ENCODE measurements at regions of chr6 and their contacts with region 1.

Region 1: GRCh38 chr6:139291813-139292619 is at the start of gene TXLNB:
- DNase-seq: peak; percentile 81 to 95 (median 89)
- H3K4me3 ChIP-seq: peak within 1 kb of the TSS; percentile 26 to 42
- H3K4me3 Mint-ChIP-seq: peak within 1 kb of the TSS; percentile 79 to 91 (median 85)
- H3K27ac ChIP-seq: peak within 1 kb of the TSS; percentile 59
- H3K27ac Mint-ChIP-seq: peak within 1 kb of the TSS; percentile 94 to 99 (median 97)
- H3K4me1 ChIP-seq: peaks cover 59% of the 10 kb centered on the region
- H3K4me1 Mint-ChIP-seq: peaks cover 44 to 76% (median 58%) of the 10 kb centered on the region in 4 donors
- H3K27me3 ChIP-seq: no peaks in the 10 kb centered on the region
- H3K27me3 Mint-ChIP-seq: no peaks in the 10 kb centered on the region
- total RNA-seq, gene TXLNB: 1.4 to 1.6 TPM

Region 2: GRCh38 chr6:139109558-139109957 is 182.5 kb before region 1 on chr6:
- CTCF ChIA-PET with region 1: interaction called, 7 read pairs
- POLR2A ChIA-PET with region 1: interaction called, 11 read pairs
- intact Hi-C with region 1: no loop called
- DNase-seq: peak in 4 of 5 donors; percentile 11 to 30 (median 21)
- H3K4me3 ChIP-seq: no peak overlapping the region
- H3K4me3 Mint-ChIP-seq: peak overlapping the region in 2 of 8 donors; percentile 13 to 39
- H3K27ac ChIP-seq: no peak overlapping the region
- H3K27ac Mint-ChIP-seq: peak overlapping the region; percentile 3 to 87 (median 44)
- H3K4me1 ChIP-seq: peaks cover 50% of the 10 kb centered on the region
- H3K4me1 Mint-ChIP-seq: peaks cover 38 to 59% (median 51%) of the 10 kb centered on the region in 4 donors
- H3K27me3 ChIP-seq: no peaks in the 10 kb centered on the region
- H3K27me3 Mint-ChIP-seq: no peaks in the 10 kb centered on the region

Region 3: GRCh38 chr6:139161817-139162284 is 130.2 kb before region 1 on chr6:
- CTCF ChIA-PET with region 1: interaction called, 5 read pairs
- POLR2A ChIA-PET with region 1: interaction called, 27 read pairs
- intact Hi-C with region 1: no loop called
- DNase-seq: peak; percentile 62 to 87 (median 69)
- H3K4me3 ChIP-seq: peak overlapping the region in 1 of 2 donors; percentile 12
- H3K4me3 Mint-ChIP-seq: peak overlapping the region; percentile 76 to 91 (median 83)
- H3K27ac ChIP-seq: peak overlapping the region; percentile 56
- H3K27ac Mint-ChIP-seq: peak overlapping the region; percentile 86 to 98 (median 95)
- H3K4me1 ChIP-seq: peaks cover 100% of the 10 kb centered on the region
- H3K4me1 Mint-ChIP-seq: peaks cover 73 to 97% (median 85%) of the 10 kb centered on the region in 4 donors
- H3K27me3 ChIP-seq: no peaks in the 10 kb centered on the region
- H3K27me3 Mint-ChIP-seq: no peaks in the 10 kb centered on the region

Region 4: DNA sequence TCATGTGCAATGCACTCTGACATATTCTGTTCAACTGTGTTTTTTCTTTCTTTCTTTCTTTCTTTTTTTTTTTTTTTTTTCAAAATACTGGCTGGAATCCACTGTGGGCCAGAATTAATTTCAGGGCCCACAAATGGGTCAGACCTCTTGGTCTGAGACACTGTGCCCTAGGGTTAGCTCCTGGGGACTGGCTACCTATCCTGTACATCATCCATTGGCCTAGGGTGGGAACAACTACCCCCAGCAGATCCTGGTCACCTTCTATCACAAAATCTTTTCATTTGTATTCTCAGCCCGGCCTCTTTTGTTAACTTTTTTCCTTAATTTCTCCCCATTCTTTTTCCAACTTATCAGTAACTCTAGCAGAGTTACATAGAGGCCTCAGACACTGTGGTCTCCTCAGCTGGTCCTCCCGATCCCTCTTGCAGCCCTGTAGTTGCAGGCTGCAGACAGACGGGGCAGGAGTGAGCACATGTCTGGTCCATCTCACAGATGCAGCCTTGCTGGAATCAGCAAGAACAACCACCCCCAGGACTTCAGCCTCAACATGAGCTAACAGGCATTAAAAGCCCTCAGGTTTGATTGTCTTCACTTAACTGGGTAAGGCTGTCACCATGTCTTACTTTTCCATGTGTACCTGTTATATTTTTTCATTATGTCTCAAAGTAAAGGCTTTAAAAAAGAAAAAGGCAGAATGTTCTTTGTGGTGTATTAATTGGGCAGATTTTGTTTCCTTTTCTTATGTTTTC is 41.5 kb before region 1 on chr6:
- CTCF ChIA-PET with region 1: interaction called, 27 read pairs
- POLR2A ChIA-PET with region 1: interaction called, 54 read pairs
- intact Hi-C with region 1: loop called (anchors 2 kb)
- DNase-seq: peak; percentile 55 to 62 (median 60)
- H3K4me3 ChIP-seq: peak overlapping the region in 1 of 2 donors; percentile 1
- H3K4me3 Mint-ChIP-seq: peak overlapping the region; percentile 16 to 90 (median 69)
- H3K27ac ChIP-seq: peak overlapping the region; percentile 40
- H3K27ac Mint-ChIP-seq: peak overlapping the region; percentile 80 to 99 (median 92)
- H3K4me1 ChIP-seq: peaks cover 45% of the 10 kb centered on the region
- H3K4me1 Mint-ChIP-seq: peaks cover 40 to 51% (median 44%) of the 10 kb centered on the region in 4 donors
- H3K27me3 ChIP-seq: no peaks in the 10 kb centered on the region
- H3K27me3 Mint-ChIP-seq: no peaks in the 10 kb centered on the region

Region 5: DNA sequence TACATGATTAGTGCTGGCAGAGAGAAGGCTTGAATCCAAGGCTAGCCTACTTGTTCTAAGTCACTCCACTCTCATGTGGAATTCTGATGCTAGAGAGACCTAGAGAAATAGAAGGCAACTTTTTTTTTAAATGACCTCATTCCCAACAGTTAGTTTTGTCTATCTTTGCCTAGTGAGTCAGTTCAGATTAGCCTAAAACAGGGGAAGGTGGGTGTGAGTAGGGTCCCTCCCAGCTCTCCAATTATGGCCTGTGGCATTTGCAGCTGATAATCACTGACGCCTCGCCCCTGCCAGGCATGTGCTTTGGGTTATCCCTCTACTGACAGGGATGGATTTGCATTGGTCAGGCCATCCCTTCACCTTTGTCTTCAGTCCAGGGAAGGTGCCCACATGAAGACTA is 13.8 kb before region 1 on chr6:
- CTCF ChIA-PET with region 1: interaction called, 3 read pairs
- POLR2A ChIA-PET with region 1: interaction called, 45 read pairs
- intact Hi-C with region 1: loop called (anchors 1 kb)
- DNase-seq: no peak
- H3K4me3 ChIP-seq: no peak overlapping the region
- H3K4me3 Mint-ChIP-seq: no peak overlapping the region
- H3K27ac ChIP-seq: no peak overlapping the region
- H3K27ac Mint-ChIP-seq: peak overlapping the region in 6 of 7 donors; percentile 25 to 85 (median 60)
- H3K4me1 ChIP-seq: peaks cover 17% of the 10 kb centered on the region
- H3K4me1 Mint-ChIP-seq: peaks cover 12 to 31% (median 23%) of the 10 kb centered on the region in 4 donors
- H3K27me3 ChIP-seq: no peaks in the 10 kb centered on the region
- H3K27me3 Mint-ChIP-seq: no peaks in the 10 kb centered on the region

Region 6: DNA sequence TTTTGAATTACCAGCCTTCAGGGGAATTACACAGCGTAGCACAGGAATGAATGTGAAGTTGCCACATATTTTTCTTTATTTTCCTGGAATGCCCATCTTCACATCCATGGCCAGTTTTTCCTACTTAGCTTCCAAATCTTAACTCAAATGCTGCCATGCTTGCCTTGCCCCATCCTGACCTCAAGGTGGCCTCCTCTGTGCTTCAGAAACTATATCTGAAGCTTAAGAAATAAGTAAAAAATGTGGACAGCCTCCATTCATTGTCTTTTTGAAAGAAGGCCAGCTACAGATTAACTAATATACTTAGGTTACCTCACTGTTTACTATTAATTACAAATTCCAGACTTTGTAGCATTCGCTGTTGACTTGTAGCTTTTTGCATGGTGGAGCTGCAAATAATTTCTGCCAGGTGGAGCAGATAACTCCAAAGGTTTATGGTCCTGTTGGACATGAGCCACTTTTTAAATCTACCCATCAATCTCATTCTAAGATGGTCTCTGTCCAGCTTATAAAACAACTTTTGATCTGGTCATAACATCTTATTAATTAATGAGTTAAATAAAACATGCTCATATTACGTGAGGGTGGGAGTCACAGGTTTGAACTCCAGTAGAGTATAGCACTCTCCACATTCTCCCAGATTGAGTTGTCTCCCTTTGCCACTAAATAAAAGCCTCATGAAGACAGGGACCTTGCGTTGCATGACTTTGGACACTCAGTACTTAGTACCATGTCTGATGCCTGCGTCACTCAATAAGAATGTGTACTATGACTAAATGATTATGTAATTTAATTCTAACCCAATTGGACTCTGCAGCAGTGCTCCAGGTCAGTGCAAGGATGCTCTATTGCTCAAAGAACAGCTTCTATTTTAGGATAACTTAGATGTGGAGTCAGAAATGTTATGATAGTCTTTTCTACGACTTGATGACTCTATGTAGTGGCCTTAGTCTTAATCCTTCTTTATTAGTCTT is 761.0 kb after region 1 on chr6:
- CTCF ChIA-PET with region 1: no interaction called
- POLR2A ChIA-PET with region 1: no interaction called
- intact Hi-C with region 1: no loop called
- DNase-seq: no peak
- H3K4me3 ChIP-seq: no peak overlapping the region
- H3K4me3 Mint-ChIP-seq: no peak overlapping the region
- H3K27ac ChIP-seq: no peak overlapping the region
- H3K27ac Mint-ChIP-seq: no peak overlapping the region
- H3K4me1 ChIP-seq: no peaks in the 10 kb centered on the region
- H3K4me1 Mint-ChIP-seq: no peaks in the 10 kb centered on the region
- H3K27me3 ChIP-seq: no peaks in the 10 kb centered on the region
- H3K27me3 Mint-ChIP-seq: peaks cover 0 to 5% of the 10 kb centered on the region in 2 donors

Measured in CD4-positive, alpha-beta memory T cell (primary cell).